CD8-positive, alpha-beta T cell (primary cell): ENCODE measurements at regions of chr1 and their contacts with region 1.

Region 1: GRCh38 chr1:63367215-63368103 is at the start of gene ALG6:
- DNase-seq: peak; percentile 79 to 97 (median 89)
- ATAC-seq: peak; percentile 86
- H3K4me3 ChIP-seq: peak within 1 kb of the TSS; percentile 87 to 97
- H3K4me3 Mint-ChIP-seq: peak within 1 kb of the TSS; percentile 96
- H3K27ac ChIP-seq: peak within 1 kb of the TSS; percentile 61 to 73
- H3K27ac Mint-ChIP-seq: peak within 1 kb of the TSS; percentile 88
- H3K4me1 ChIP-seq: peaks cover 14% of the 10 kb centered on the region
- H3K4me1 Mint-ChIP-seq: peaks cover 36% of the 10 kb centered on the region
- H3K27me3 ChIP-seq: peaks cover 0 to 2% of the 10 kb centered on the region in 2 experiments
- H3K27me3 Mint-ChIP-seq: peaks cover 8% of the 10 kb centered on the region
- CTCF ChIP-seq: no peak
- total RNA-seq, gene ALG6: 10.0 to 10.3 TPM

Region 2: GRCh38 chr1:62436466-62437256 is 930.8 kb before region 1 on chr1 and contains the start of gene USP1:
- CTCF ChIA-PET with region 1: no interaction called
- POLR2A ChIA-PET with region 1: no interaction called
- intact Hi-C with region 1: loop called (anchors 1 to 5 kb)
- DNase-seq: peak; percentile 94 to 100 (median 96)
- ATAC-seq: peak; percentile 82
- H3K4me3 ChIP-seq: peak within 1 kb of the TSS; percentile 90 to 97
- H3K4me3 Mint-ChIP-seq: peak within 1 kb of the TSS; percentile 98
- H3K27ac ChIP-seq: peak within 1 kb of the TSS; percentile 96 to 98
- H3K27ac Mint-ChIP-seq: peak within 1 kb of the TSS; percentile 100
- H3K4me1 ChIP-seq: peaks cover 33% of the 10 kb centered on the region
- H3K4me1 Mint-ChIP-seq: peaks cover 40% of the 10 kb centered on the region
- H3K27me3 ChIP-seq: no peaks in the 10 kb centered on the region
- H3K27me3 Mint-ChIP-seq: no peaks in the 10 kb centered on the region
- CTCF ChIP-seq: no peak
- total RNA-seq, gene USP1: 23.1 to 23.7 TPM

Region 3: GRCh38 chr1:63327417-63328139 is 39.9 kb before region 1 on chr1:
- CTCF ChIA-PET with region 1: no interaction called
- POLR2A ChIA-PET with region 1: no interaction called
- intact Hi-C with region 1: loop called in 1 of 2 experiments (anchors 2 kb)
- DNase-seq: peak in 2 of 9 experiments; percentile 36 to 51
- ATAC-seq: peak; percentile 15
- H3K4me3 ChIP-seq: no peak overlapping the region
- H3K4me3 Mint-ChIP-seq: no peak overlapping the region
- H3K27ac ChIP-seq: no peak overlapping the region
- H3K27ac Mint-ChIP-seq: no peak overlapping the region
- H3K4me1 ChIP-seq: peaks cover 28% of the 10 kb centered on the region
- H3K4me1 Mint-ChIP-seq: peaks cover 25% of the 10 kb centered on the region
- H3K27me3 ChIP-seq: peaks cover 62 to 81% of the 10 kb centered on the region in 2 experiments
- H3K27me3 Mint-ChIP-seq: peaks cover 70% of the 10 kb centered on the region
- CTCF ChIP-seq: no peak